SK-N-SH (cell line): ENCODE measurements at regions of chr17 and their contacts with region 1.

Region 1: GRCh38 chr17:74961657-74962490 is 10.7 kb downstream of the HID1 start:
- DNase-seq: peak; percentile 96
- H3K4me3 ChIP-seq: no peak overlapping the region
- H3K27ac ChIP-seq: no peak overlapping the region; a peak in 1 of 4 replicates
- H3K4me1 ChIP-seq: no peaks in the 10 kb centered on the region; a peak in 1 of 4 replicates
- H3K27me3 ChIP-seq: no peaks in the 10 kb centered on the region
- CTCF ChIP-seq: peak; percentile 91
- EP300 ChIP-seq: no peak
- RAD21 ChIP-seq: peak; percentile 95

Region 2: DNA sequence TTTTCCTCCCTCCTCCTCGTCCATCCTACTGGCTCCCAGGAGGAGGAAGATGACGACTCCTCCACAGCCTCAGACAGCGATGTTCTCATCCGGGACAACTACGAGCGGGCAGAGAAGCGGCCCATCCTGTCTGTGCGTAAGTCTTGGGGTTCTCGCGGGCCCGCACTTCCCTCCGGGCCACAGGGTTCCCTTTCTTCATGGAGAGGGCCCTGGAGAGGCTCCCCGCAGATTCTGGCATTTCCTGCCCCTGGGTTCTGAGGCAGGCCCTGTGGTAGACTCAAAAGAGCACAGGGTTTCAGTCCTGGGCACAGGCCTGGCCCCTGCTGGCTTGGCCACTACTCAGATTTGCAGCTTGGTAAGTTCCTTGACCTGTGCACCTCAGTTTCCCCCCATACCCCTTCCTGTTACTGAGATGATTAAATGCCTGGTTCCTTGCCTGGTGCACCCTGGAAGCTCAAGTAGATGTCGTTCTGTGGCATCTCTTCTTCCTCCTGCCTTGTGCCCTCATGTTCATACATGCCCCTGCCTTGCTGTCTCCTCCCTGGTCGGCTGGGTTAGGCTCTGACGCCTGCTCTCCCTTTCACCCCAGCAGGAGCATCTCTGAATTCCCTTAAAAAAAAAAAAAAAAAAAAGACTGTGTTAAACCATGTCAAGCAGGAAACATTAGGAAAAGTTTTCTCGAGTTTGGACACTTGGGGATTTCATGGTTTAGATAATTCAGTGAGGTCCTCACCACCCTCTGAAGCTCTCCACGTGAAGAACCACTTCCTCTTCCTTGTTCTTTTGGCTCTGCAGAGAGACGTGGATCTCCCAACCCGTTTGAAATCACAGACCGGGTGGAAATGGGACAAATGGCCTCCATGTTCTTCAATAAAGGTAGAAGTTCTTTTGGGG is 171.5 kb before region 1 on chr17:
- CTCF ChIA-PET with region 1: interaction called, 24 read pairs
- POLR2A ChIA-PET with region 1: no interaction called
- DNase-seq: no peak
- H3K4me3 ChIP-seq: no peak overlapping the region
- H3K27ac ChIP-seq: no peak overlapping the region
- H3K4me1 ChIP-seq: no peaks in the 10 kb centered on the region; a peak in 1 of 4 replicates
- H3K27me3 ChIP-seq: no peaks in the 10 kb centered on the region
- CTCF ChIP-seq: no peak
- EP300 ChIP-seq: no peak
- RAD21 ChIP-seq: no peak

Region 3: DNA sequence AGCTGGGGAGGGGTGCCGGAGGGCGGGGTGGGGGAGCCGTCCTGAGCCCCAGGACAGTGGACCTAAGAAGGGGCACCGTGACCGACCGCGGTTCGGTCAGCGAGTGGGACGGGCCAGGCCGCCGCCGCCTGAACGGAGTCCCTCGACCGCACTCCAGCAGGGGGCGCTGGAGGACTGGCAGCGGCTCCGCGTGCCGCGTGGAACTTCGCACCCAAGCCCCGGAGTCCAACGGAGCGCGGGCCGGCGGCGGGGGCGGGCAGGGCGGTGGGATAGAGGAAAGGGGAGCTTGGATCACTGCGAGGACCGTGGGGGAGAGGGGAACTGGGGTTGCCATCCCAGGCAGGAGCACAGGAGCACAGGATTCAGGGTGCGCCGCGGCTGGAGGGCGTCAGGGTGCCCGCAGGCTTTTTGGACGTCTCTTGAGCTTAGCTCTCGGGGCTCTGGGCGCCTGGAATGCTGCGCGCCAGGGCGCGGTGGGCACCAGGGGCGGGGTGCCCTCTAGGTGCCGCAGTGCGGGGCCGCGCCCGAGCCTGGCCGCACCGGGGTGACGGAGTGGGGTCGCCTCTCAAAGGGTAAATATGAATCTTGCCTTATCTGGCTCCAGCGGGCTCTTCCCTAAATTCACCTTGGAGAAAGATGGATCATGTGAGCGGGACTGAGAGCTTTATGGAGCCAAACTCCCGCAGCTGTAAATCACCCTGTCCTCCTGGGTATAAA is 38.2 kb before region 1 on chr17:
- CTCF ChIA-PET with region 1: interaction called, 286 read pairs
- POLR2A ChIA-PET with region 1: interaction called, 3 read pairs
- DNase-seq: peak; percentile 98
- H3K4me3 ChIP-seq: peak overlapping the region; percentile 42 to 62
- H3K27ac ChIP-seq: no peak overlapping the region
- H3K4me1 ChIP-seq: peaks cover 0 to 19% of the 10 kb centered on the region in 2 experiments; a peak in 1 of 4 replicates
- H3K27me3 ChIP-seq: peaks cover 71% of the 10 kb centered on the region
- CTCF ChIP-seq: peak; percentile 86
- EP300 ChIP-seq: no peak
- RAD21 ChIP-seq: peak; percentile 77

Region 4: GRCh38 chr17:74972107-74972972 is 10.5 kb after region 1 on chr17 and contains the start of gene HID1:
- CTCF ChIA-PET with region 1: interaction called, 219 read pairs
- POLR2A ChIA-PET with region 1: interaction called, 18 read pairs
- DNase-seq: peak; percentile 96
- H3K4me3 ChIP-seq: peak within 1 kb of the TSS; percentile 54 to 70
- H3K27ac ChIP-seq: peak within 1 kb of the TSS in 1 of 2 experiments; percentile 85; a peak in 2 of 4 replicates
- H3K4me1 ChIP-seq: peaks cover 0 to 22% of the 10 kb centered on the region in 2 experiments; a peak in 1 of 4 replicates
- H3K27me3 ChIP-seq: peaks cover 26% of the 10 kb centered on the region
- CTCF ChIP-seq: no peak
- EP300 ChIP-seq: no peak
- RAD21 ChIP-seq: no peak
- polyA plus RNA-seq, gene HID1: 2.5 and 2.9 TPM in 2 replicates

Region 5: GRCh38 chr17:75024686-75025397 is 63.0 kb after region 1 on chr17:
- CTCF ChIA-PET with region 1: interaction called, 18 read pairs
- POLR2A ChIA-PET with region 1: no interaction called
- DNase-seq: no peak
- H3K4me3 ChIP-seq: no peak overlapping the region
- H3K27ac ChIP-seq: no peak overlapping the region
- H3K4me1 ChIP-seq: no peaks in the 10 kb centered on the region
- H3K27me3 ChIP-seq: no peaks in the 10 kb centered on the region
- CTCF ChIP-seq: no peak
- EP300 ChIP-seq: no peak
- RAD21 ChIP-seq: no peak

Region 6: GRCh38 chr17:75059369-75060345 is 97.8 kb after region 1 on chr17:
- CTCF ChIA-PET with region 1: interaction called, 15 read pairs
- POLR2A ChIA-PET with region 1: interaction called, 3 read pairs
- DNase-seq: peak; percentile 47
- H3K4me3 ChIP-seq: no peak overlapping the region
- H3K27ac ChIP-seq: no peak overlapping the region
- H3K4me1 ChIP-seq: no peaks in the 10 kb centered on the region
- H3K27me3 ChIP-seq: no peaks in the 10 kb centered on the region
- CTCF ChIP-seq: peak; percentile 57
- EP300 ChIP-seq: no peak
- RAD21 ChIP-seq: peak; percentile 55